ENCODE measurements at regions of chr1 and their contacts with region 1.

Region 1: DNA sequence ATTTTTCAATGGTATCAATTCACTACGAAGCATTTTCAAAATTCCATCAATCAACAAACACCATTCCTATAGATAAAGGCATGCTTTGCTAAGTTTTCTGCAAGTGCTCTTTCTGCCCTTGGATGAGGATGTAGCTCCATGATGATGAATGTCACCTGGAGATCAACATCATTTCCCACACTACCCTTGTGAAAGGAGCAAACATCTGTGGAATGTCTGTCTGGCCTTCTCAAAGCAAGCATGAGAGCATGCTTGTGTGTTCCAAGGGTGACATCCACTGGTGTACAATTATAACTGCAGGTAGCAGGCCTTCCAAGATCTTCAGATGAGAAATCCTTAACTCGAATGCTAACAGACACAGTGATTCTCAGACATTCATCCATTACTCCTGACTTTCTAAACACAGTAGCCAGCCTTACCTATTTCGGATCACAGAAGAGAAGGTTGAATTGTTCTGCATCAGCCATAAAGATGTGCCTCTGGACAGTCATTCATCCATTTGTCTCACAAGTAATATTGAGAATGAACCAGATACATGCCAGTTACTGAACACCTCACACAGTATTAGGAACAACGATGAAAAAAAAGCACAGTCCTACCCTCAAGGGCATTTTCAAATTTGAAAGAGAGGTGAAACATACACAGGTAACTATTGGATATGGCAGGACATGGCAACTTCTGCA is 162.4 kb downstream of the TPR start:
- DNase-seq: no peak

Region 2: GRCh38 chr1:185720633-185721272 is 491.9 kb before region 1 on chr1:
- intact Hi-C with region 1: loop called (anchors 2 kb)
- DNase-seq: no peak

Region 3: GRCh38 chr1:185813401-185813979 is 399.2 kb before region 1 on chr1:
- intact Hi-C with region 1: loop called (anchors 2 kb)
- DNase-seq: no peak

Region 4: GRCh38 chr1:185960422-185961321 is 252.0 kb before region 1 on chr1:
- intact Hi-C with region 1: loop called (anchors 10 kb)
- DNase-seq: no peak

Region 5: DNA sequence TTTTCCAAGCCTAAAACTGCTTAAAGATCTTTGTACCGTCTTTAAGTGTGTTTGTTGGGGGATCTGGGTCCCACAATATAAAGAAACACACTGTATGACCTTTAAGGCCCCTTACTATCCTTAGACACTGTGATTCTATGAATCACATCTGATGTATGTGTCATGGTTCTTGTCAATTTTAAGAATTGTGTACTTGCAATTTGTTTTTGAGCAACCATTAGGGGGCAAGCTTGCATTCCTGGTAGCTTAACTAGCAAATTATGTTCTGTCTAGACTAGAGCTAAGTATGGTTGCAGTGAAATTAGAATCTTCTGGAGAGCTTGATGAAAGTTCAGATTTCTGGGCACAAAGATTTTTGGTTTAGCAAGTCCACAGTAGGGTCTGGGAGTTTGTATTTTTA is 57.1 kb before region 1 on chr1:
- intact Hi-C with region 1: loop called (anchors 2 kb)
- DNase-seq: no peak

Measured in cardiac septum (tissue), 1 donor.